ENCODE measurements at regions of chr12 and their contacts with region 1.

Region 1: DNA sequence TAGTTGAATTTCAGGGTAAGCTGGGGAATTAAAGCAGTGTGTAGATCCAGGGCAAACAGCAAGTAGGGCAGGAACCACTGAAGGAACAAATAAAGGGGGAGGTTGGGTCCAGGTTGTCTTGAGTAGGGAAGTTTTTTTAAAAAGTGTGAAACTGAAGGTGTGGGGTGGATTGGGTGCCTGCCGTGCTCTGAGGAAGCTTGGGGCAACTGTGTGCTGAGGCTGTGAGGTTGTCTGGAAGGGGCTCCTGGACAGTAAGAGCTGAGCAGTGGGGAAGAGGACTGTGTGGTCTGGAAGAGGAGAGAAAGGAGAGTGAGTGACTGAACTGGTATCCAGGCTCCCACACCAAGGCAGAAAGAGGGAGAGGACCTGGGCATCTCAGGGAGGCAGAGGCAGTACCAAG is 10.9 kb upstream of the GPR162 start:
- DNase-seq: no peak
- H3K4me3 ChIP-seq: no peak overlapping the region
- H3K27me3 ChIP-seq: peaks cover 7% of the 10 kb centered on the region
- CTCF ChIP-seq: no peak

Region 2: GRCh38 chr12:6697584-6698351 is 113.0 kb before region 1 on chr12:
- CTCF ChIA-PET with region 1: no interaction called
- POLR2A ChIA-PET with region 1: no interaction called
- DNase-seq: no peak
- H3K4me3 ChIP-seq: no peak overlapping the region
- H3K27me3 ChIP-seq: peaks cover 7% of the 10 kb centered on the region; the same call in 1 of the 2 replicates
- CTCF ChIP-seq: peak; percentile 78

Region 3: GRCh38 chr12:6914246-6914946 is 103.6 kb after region 1 on chr12 and contains the start of gene ENO2:
- CTCF ChIA-PET with region 1: no interaction called
- POLR2A ChIA-PET with region 1: no interaction called
- DNase-seq: no peak
- H3K4me3 ChIP-seq: peak within 1 kb of the TSS; percentile 91
- H3K27me3 ChIP-seq: no peaks in the 10 kb centered on the region
- CTCF ChIP-seq: no peak
- polyA plus RNA-seq, gene ENO2: 27.9 and 29.7 TPM in 2 replicates

Region 4: DNA sequence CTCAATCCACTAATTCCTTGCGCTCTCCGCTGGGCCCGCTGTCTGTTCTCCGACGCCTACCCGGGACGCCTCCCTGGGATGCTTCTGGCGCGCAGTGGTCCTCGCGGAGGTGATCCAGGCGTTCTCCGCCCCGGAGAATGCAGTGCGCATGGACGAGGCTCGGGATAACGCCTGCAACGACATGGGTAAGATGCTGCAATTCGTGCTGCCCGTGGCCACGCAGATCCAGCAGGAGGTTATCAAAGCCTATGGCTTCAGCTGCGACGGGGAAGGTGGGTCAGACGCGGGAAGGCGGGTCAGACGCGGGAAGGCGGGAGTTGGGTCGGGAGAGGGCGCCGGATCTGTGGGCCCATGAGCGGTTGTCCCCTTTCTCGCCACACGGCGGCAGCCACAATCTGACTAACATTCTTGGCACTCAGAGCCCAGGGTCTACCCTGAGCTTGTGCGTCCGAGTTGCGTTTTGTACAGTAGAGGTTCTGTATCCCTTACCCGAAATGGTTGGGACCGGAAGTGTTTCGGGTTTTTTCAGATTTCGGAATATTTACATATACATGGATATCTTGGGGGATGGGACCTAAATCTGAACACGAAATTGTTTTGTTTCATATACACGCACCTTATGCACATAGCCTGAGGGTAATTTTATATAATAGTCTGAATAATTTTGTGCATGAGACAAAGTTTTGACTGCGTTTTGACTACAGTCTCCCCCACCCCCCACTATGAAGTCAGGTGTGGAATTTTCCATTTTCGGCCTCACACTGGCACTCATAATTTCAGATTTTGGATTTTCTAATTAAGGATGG is 133.8 kb after region 1 on chr12:
- CTCF ChIA-PET with region 1: no interaction called
- POLR2A ChIA-PET with region 1: interaction called, 11 read pairs
- DNase-seq: peak; percentile 57
- H3K4me3 ChIP-seq: peak overlapping the region; percentile 67
- H3K27me3 ChIP-seq: no peaks in the 10 kb centered on the region
- CTCF ChIP-seq: peak; percentile 87

Measured in BJ (cell line).